KBM-7 (cell line): ENCODE measurements at regions of chr1 and their contacts with region 1.

Region 1: DNA sequence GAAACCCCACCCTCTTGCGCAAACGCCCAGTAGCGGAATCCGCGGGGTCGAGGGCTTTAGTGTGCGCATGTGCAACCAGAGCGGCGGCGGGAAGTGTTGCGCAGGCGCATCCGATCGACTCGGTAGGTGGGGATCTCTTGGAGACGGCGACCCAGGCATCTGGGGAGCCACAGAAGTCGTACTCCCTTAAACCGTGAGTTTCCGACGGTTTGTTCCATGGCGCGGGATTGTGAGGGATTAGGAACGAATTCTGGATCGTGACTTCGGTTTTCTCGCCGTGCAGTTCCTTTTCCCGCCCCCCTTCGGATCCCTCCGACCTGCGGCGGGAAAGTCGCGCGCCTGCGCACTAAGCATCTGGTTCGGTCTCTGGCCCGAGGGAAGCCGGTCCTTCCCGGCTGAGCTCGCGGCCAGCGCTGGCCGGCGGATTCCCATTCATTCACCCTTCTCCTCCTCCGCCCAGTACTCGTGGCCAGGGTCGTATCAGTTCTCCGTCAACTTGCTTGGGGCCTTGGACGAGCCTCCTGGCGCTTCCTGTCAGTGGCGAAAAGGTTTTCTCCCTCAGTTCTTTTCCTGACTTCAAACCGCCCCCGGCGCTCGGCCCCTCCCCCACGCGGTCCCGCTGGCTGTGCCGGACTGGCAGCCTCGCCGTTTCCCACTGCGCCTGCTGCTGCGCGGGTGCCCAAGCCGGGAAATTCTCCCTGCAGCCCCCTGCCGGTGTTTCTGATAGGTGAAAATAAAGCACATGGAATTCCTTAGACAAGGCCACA is at the start of gene CDC7:
- DNase-seq: peak; percentile 95

Region 2: DNA sequence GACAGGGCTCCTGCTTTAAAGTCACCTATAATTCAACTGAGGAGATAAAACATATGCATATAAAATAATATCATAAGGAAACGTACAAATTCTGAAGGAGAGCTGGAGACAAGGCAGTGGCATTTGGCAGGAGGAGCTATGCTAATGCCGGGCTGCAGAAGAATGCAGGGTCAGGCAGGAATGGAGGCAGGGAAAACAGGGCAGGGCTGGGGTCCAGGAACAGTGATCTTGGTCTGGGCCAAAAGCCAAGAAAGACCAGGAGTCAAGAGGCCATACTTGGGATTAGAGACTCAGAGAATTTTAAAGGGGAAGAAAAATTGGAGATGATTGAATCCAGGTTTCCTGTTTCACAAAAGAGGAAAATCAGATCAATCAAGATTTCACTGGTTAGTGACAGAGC is 428.3 kb after region 1 on chr1:
- in situ Hi-C with region 1: loop called (anchors 25 kb)
- DNase-seq: no peak